Common myeloid progenitor, CD34-positive (primary cell): ENCODE measurements at regions of chr6 and their contacts with region 1.

Region 1: DNA sequence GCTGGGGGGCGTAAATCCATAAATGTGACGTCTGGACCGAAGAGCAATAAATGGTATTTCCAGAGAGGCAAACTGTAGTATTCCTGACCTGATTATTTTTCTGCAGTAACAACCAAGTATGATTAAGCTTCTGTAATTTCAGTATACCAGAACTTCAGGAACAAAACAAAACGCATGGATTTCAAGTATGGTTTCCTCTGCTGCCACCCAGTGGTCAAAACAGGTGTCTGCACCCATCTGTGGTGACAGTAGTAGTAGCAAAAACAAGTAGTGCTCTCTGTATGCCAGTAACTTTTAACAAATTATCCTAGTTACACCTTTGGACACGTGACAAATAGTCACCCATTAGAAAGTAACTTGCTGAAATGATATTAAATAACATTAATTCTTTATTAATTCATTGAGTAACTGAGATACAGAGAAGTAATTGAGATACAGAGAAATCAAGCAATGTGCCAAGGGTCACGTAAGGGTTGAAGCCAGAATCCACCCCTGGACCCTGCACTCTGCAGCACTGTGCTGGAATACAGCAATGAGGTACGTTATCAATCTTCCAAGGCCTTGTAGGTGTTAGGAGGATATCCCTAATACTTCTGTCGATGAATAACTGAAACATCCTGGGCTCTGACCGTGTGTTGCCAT is 7.9 kb downstream of the CALHM4 start:
- DNase-seq: peak; percentile 71 to 83 (median 74)
- H3K4me3 ChIP-seq: no peak overlapping the region
- H3K27ac ChIP-seq: no peak overlapping the region
- H3K4me1 ChIP-seq: peaks cover 0 to 11% (median 4%) of the 10 kb centered on the region in 4 experiments
- H3K27me3 ChIP-seq: peaks cover 0 to 2% (median 0%) of the 10 kb centered on the region in 5 experiments

Region 2: DNA sequence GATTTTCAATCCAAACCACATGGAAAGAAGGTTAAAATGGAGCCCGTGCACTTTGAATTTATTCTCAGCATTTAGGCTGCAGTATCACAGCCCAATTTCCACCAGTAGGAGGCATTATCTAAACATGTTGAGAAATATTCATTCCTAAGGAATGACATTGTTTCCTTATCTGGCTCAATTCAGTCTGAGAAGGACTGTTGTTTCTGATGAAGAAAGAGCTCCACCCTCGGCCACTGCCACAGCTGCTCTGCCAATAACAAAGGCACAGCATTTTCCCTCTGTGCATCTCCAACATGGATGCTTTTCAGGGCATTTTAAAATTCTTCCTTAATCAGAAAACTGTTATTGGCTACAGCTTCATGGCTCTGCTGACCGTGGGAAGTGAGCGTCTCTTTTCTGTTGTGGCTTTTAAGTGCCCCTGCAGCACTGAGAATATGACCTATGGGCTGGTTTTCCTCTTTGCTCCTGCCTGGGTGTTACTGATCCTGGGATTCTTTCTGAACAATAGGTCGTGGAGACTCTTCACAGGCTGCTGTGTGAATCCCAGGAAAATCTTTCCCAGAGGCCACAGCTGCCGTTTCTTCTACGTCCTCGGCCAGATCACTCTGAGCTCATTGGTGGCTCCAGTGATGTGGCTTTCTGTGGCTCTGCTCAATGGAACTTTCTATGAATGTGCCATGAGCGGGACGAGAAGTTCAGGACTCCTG is 49.9 kb before region 1 on chr6 and contains the start of gene CALHM5:
- CTCF ChIA-PET with region 1: interaction called, 10 read pairs
- POLR2A ChIA-PET with region 1: no interaction called
- DNase-seq: no peak
- H3K4me3 ChIP-seq: no peak within 1 kb of the TSS
- H3K27ac ChIP-seq: no peak within 1 kb of the TSS
- H3K4me1 ChIP-seq: peaks cover 0 to 3% (median 0%) of the 10 kb centered on the region in 4 experiments
- H3K27me3 ChIP-seq: no peaks in the 10 kb centered on the region

Region 3: GRCh38 chr6:116542426-116542825 is 19.1 kb before region 1 on chr6:
- CTCF ChIA-PET with region 1: interaction called, 15 read pairs
- POLR2A ChIA-PET with region 1: interaction called, 3 read pairs
- DNase-seq: no peak
- H3K4me3 ChIP-seq: no peak overlapping the region
- H3K27ac ChIP-seq: no peak overlapping the region
- H3K4me1 ChIP-seq: no peaks in the 10 kb centered on the region
- H3K27me3 ChIP-seq: peaks cover 0 to 2% (median 0%) of the 10 kb centered on the region in 5 experiments